ENCODE measurements at regions of chr3 and their contacts with region 1.

Region 1: GRCh38 chr3:44529927-44530326 is 25.1 kb upstream of the ZKSCAN7 start:
- DNase-seq: no peak
- ATAC-seq: no peak
- H3K4me3 ChIP-seq: no peak overlapping the region
- H3K27ac ChIP-seq: no peak overlapping the region
- H3K4me1 ChIP-seq: no peaks in the 10 kb centered on the region
- H3K27me3 ChIP-seq: peaks cover 0 to 34% (median 10%) of the 10 kb centered on the region in 7 donors
- CTCF ChIP-seq: peak in 4 of 9 donors; percentile 8 to 40 (median 12)

Region 2: GRCh38 chr3:43531835-43532234 is 998.1 kb before region 1 on chr3:
- intact Hi-C with region 1: no loop called
- DNase-seq: no peak
- ATAC-seq: no peak
- H3K4me3 ChIP-seq: no peak overlapping the region
- H3K27ac ChIP-seq: no peak overlapping the region
- H3K4me1 ChIP-seq: no peaks in the 10 kb centered on the region
- H3K27me3 ChIP-seq: no peaks in the 10 kb centered on the region
- CTCF ChIP-seq: no peak

Region 3: GRCh38 chr3:44323341-44323955 is 206.5 kb before region 1 on chr3:
- intact Hi-C with region 1: loop called in 1 of 10 experiments (anchors 10 kb)
- DNase-seq: peak; percentile 21 to 69
- ATAC-seq: peak in 3 of 8 donors; percentile 33 to 48 (median 45)
- H3K4me3 ChIP-seq: no peak overlapping the region
- H3K27ac ChIP-seq: no peak overlapping the region
- H3K4me1 ChIP-seq: no peaks in the 10 kb centered on the region
- H3K27me3 ChIP-seq: peaks cover 0 to 4% (median 0%) of the 10 kb centered on the region in 7 donors
- CTCF ChIP-seq: peak; percentile 64 to 88 (median 79)

Region 4: GRCh38 chr3:44685128-44685800 is 155.3 kb after region 1 on chr3:
- intact Hi-C with region 1: loop called in 1 of 10 experiments (anchors 10 kb)
- DNase-seq: peak; percentile 76 to 78
- ATAC-seq: peak; percentile 89 to 99 (median 95)
- H3K4me3 ChIP-seq: peak overlapping the region; percentile 59 to 97 (median 78)
- H3K27ac ChIP-seq: peak overlapping the region in 6 of 10 donors; percentile 39 to 82 (median 50)
- H3K4me1 ChIP-seq: peaks cover 0 to 15% (median 7%) of the 10 kb centered on the region in 9 donors
- H3K27me3 ChIP-seq: peaks cover 0 to 25% (median 14%) of the 10 kb centered on the region in 7 donors
- CTCF ChIP-seq: no peak

Region 5: GRCh38 chr3:44712455-44713075 is 182.6 kb after region 1 on chr3 and contains the start of gene ZNF502:
- intact Hi-C with region 1: loop called in 1 of 10 experiments (anchors 10 kb)
- DNase-seq: peak; percentile 87 to 91
- ATAC-seq: peak; percentile 98 to 99 (median 98)
- H3K4me3 ChIP-seq: peak within 1 kb of the TSS; percentile 67 to 97 (median 83)
- H3K27ac ChIP-seq: peak within 1 kb of the TSS in 9 of 10 donors; percentile 41 to 82 (median 73)
- H3K4me1 ChIP-seq: peaks cover 0 to 12% (median 6%) of the 10 kb centered on the region in 9 donors
- H3K27me3 ChIP-seq: peaks cover 0 to 21% (median 5%) of the 10 kb centered on the region in 7 donors
- CTCF ChIP-seq: peak in 8 of 9 donors; percentile 10 to 58 (median 44)
- total RNA-seq, gene ZNF502: 2.8 to 4.6 (median 3.5) TPM

Region 6: DNA sequence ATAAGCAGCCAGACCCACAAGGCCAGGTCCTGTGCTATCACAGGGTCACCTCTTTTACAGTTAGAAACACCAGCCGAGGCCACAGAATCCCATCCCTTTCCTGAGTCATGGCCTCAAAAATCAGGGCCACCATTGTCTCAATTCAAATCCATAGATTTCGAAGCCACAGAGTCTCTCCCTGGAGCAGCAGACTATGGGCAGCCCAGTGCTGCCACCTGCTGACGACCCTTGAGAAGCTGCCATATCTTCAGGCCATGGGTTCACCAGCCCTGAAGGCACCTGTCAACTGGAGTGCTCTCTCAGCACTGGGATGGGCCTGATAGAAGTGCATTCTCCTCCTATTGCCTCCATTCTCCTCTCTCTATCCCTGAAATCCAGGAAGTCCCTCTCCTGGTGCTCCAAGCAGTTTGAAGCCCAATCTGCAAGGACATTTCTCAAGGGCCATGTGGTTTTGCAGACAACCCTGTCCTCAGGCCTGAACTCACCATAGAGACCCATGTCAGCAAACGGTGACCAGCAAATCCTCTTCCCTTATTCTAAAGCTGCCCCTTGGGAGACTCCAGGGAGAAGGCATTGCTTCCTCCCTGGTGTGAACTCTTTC is 384.0 kb after region 1 on chr3:
- intact Hi-C with region 1: loop called (anchors 2 to 5 kb)
- DNase-seq: peak; percentile 44 to 65
- ATAC-seq: peak in 7 of 8 donors; percentile 52 to 75 (median 66)
- H3K4me3 ChIP-seq: no peak overlapping the region
- H3K27ac ChIP-seq: no peak overlapping the region
- H3K4me1 ChIP-seq: peaks cover 0 to 15% (median 7%) of the 10 kb centered on the region in 9 donors
- H3K27me3 ChIP-seq: peaks cover 0 to 10% (median 0%) of the 10 kb centered on the region in 7 donors
- CTCF ChIP-seq: peak; percentile 62 to 85 (median 83)

Region 7: GRCh38 chr3:45037734-45038455 is 508.0 kb after region 1 on chr3:
- intact Hi-C with region 1: loop called in 2 of 10 experiments (anchors 5 kb)
- DNase-seq: peak; percentile 86 to 93
- ATAC-seq: peak; percentile 63 to 86 (median 82)
- H3K4me3 ChIP-seq: peak overlapping the region in 2 of 10 donors; percentile 24 to 26
- H3K27ac ChIP-seq: peak overlapping the region in 5 of 10 donors; percentile 25 to 62 (median 32)
- H3K4me1 ChIP-seq: peaks cover 3 to 62% (median 33%) of the 10 kb centered on the region in 9 donors
- H3K27me3 ChIP-seq: no peaks in the 10 kb centered on the region
- CTCF ChIP-seq: peak; percentile 80 to 94 (median 89)

Region 8: GRCh38 chr3:45210308-45211041 is 680.5 kb after region 1 on chr3:
- intact Hi-C with region 1: loop called in 2 of 10 experiments (anchors 5 to 10 kb)
- DNase-seq: peak; percentile 75 to 83
- ATAC-seq: peak; percentile 94 to 98 (median 96)
- H3K4me3 ChIP-seq: no peak overlapping the region
- H3K27ac ChIP-seq: no peak overlapping the region
- H3K4me1 ChIP-seq: peaks cover 0 to 9% (median 0%) of the 10 kb centered on the region in 9 donors
- H3K27me3 ChIP-seq: peaks cover 0 to 10% (median 5%) of the 10 kb centered on the region in 7 donors
- CTCF ChIP-seq: peak; percentile 37 to 80 (median 72)